ENCODE measurements at regions of chr15 and their contacts with region 1.

Region 1: GRCh38 chr15:80289528-80290495 is 37.8 kb upstream of the CTXND1 start:
- DNase-seq: no peak
- ATAC-seq: no peak
- H3K4me3 ChIP-seq: no peak overlapping the region
- H3K27ac ChIP-seq: peak overlapping the region in 1 of 12 donors; percentile 87
- H3K4me1 ChIP-seq: peaks cover 0 to 18% (median 6%) of the 10 kb centered on the region in 12 donors
- H3K27me3 ChIP-seq: no peaks in the 10 kb centered on the region
- CTCF ChIP-seq: no peak
- POLR2A ChIP-seq: no peak

Region 2: DNA sequence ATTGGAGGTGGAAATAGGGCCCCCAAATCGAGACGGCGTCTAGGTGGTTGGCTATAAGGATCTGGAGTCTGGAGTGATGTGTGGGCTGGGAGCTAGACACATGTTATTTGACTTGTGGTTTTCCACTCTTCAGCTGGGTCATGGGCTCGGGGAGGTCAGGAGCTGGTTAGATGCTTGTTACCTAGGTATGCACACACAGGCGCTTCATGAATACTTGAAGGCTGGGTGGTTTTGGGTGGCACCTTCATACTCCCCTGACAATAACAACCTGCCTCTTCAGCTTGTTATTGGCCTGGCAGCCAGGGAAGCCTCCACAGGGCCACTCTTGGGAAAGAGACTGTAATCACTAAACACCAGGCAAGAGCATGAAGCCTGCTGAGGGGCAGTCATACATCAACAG is 1334.9 kb before region 1 on chr15:
- intact Hi-C with region 1: no loop called
- DNase-seq: no peak
- ATAC-seq: no peak
- H3K4me3 ChIP-seq: no peak overlapping the region
- H3K27ac ChIP-seq: no peak overlapping the region
- H3K4me1 ChIP-seq: peaks cover 0 to 26% (median 15%) of the 10 kb centered on the region in 12 donors
- H3K27me3 ChIP-seq: no peaks in the 10 kb centered on the region
- CTCF ChIP-seq: no peak
- POLR2A ChIP-seq: no peak

Region 3: DNA sequence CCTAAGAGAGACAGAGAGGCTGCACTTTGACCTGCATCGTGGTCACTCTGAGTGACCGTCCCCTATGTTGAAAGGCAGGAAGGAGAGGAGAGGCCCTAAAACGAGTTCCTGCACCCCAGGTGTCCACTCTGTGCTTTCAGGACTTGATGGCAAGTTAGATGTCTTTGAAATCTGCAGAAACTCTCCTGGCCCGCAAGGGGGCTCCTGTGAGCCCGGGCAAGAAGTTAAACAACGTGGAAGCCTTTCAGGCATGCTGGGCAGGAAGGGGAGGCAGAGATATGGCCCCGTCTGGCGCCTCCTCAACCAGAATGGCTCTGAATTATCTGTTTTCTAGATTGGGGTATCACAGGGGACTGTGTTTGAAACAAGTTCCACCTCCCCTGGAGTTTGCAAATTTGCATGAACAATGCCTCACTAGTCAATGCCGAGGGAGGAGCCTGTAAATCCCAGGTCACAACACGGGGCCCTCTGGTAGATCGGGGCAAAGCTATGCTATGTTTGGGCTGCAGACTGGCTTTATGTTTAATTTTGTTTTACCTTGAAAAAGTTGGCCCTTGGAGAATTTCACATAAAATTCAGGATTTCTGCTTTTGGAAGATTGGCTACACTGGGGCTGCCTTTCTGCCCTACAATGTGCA is 47.6 kb before region 1 on chr15:
- intact Hi-C with region 1: loop called in 1 of 10 experiments (anchors 5 kb)
- DNase-seq: peak in 3 of 5 donors; percentile 37 to 64 (median 40)
- ATAC-seq: peak in 2 of 4 donors; percentile 41 to 50
- H3K4me3 ChIP-seq: no peak overlapping the region
- H3K27ac ChIP-seq: no peak overlapping the region
- H3K4me1 ChIP-seq: peaks cover 0 to 9% (median 0%) of the 10 kb centered on the region in 12 donors
- H3K27me3 ChIP-seq: peaks cover 0 to 18% (median 3%) of the 10 kb centered on the region in 9 donors
- CTCF ChIP-seq: peak; percentile 37 to 67 (median 55)
- POLR2A ChIP-seq: no peak